Activated CD4-positive, alpha-beta T cell treated with anti-CD3 and anti-CD28 coated beads for 36 hours (primary cell): ENCODE measurements at regions of chr1 and their contacts with region 1.

Region 1: GRCh38 chr1:114511032-114511785 is at the start of gene TRIM33:
- DNase-seq: peak; percentile 95
- ATAC-seq: peak; percentile 77
- H3K4me3 Mint-ChIP-seq: peak within 1 kb of the TSS; percentile 81
- H3K27ac Mint-ChIP-seq: peak within 1 kb of the TSS; percentile 98
- H3K4me1 Mint-ChIP-seq: peaks cover 43% of the 10 kb centered on the region
- H3K27me3 Mint-ChIP-seq: no peaks in the 10 kb centered on the region
- total RNA-seq, gene TRIM33: 32.5 to 41.6 TPM

Region 2: GRCh38 chr1:112955781-112956543 is 1555.2 kb before region 1 on chr1 and contains the start of gene SLC16A1:
- CTCF ChIA-PET with region 1: no interaction called
- POLR2A ChIA-PET with region 1: no interaction called
- intact Hi-C with region 1: loop called in 1 of 2 experiments (anchors 1 kb)
- DNase-seq: peak; percentile 96
- ATAC-seq: peak; percentile 75
- H3K4me3 Mint-ChIP-seq: peak within 1 kb of the TSS; percentile 97
- H3K27ac Mint-ChIP-seq: peak within 1 kb of the TSS; percentile 100
- H3K4me1 Mint-ChIP-seq: peaks cover 56% of the 10 kb centered on the region
- H3K27me3 Mint-ChIP-seq: no peaks in the 10 kb centered on the region
- total RNA-seq, gene SLC16A1: 70.0 to 70.4 TPM

Region 3: GRCh38 chr1:113811888-113812660 is 699.1 kb before region 1 on chr1 and contains the start of gene RSBN1:
- CTCF ChIA-PET with region 1: no interaction called
- POLR2A ChIA-PET with region 1: no interaction called
- intact Hi-C with region 1: loop called in 1 of 2 experiments (anchors 5 kb)
- DNase-seq: peak; percentile 99
- ATAC-seq: peak; percentile 97
- H3K4me3 Mint-ChIP-seq: peak within 1 kb of the TSS; percentile 97
- H3K27ac Mint-ChIP-seq: peak within 1 kb of the TSS; percentile 97
- H3K4me1 Mint-ChIP-seq: peaks cover 33% of the 10 kb centered on the region
- H3K27me3 Mint-ChIP-seq: no peaks in the 10 kb centered on the region
- total RNA-seq, gene RSBN1: 22.1 to 24.3 TPM

Region 4: DNA sequence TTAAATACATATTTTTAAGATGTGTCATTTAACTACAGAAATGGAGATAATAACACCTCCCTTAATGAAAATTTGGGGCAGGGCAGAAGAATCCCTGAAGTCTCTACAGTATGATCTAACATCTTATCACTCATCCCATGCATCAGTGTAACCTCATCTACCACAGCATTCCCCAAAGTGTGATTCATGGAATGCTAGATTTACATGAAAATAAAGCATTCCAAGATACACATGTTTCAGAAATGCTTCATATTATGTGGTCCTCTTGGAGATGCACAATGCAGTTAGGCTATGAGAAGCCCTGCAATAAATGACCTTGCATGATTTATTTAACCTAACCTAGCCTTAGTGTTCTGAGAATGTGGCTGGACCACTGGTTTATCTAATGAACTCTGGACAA is 190.6 kb before region 1 on chr1:
- CTCF ChIA-PET with region 1: no interaction called
- POLR2A ChIA-PET with region 1: no interaction called
- intact Hi-C with region 1: no loop called
- DNase-seq: no peak
- ATAC-seq: no peak
- H3K4me3 Mint-ChIP-seq: no peak overlapping the region
- H3K27ac Mint-ChIP-seq: no peak overlapping the region
- H3K4me1 Mint-ChIP-seq: no peaks in the 10 kb centered on the region
- H3K27me3 Mint-ChIP-seq: no peaks in the 10 kb centered on the region

Region 5: GRCh38 chr1:114346480-114347029 is 164.7 kb before region 1 on chr1:
- CTCF ChIA-PET with region 1: interaction called, 3 read pairs
- POLR2A ChIA-PET with region 1: no interaction called
- intact Hi-C with region 1: loop called in 1 of 2 experiments (anchors 1 kb)
- DNase-seq: peak; percentile 98
- ATAC-seq: peak; percentile 98
- H3K4me3 Mint-ChIP-seq: peak overlapping the region; percentile 71
- H3K27ac Mint-ChIP-seq: peak overlapping the region; percentile 95
- H3K4me1 Mint-ChIP-seq: peaks cover 26% of the 10 kb centered on the region
- H3K27me3 Mint-ChIP-seq: no peaks in the 10 kb centered on the region

Region 6: GRCh38 chr1:114418247-114418646 is 93.0 kb before region 1 on chr1:
- CTCF ChIA-PET with region 1: no interaction called
- POLR2A ChIA-PET with region 1: no interaction called
- intact Hi-C with region 1: no loop called
- DNase-seq: no peak
- ATAC-seq: no peak
- H3K4me3 Mint-ChIP-seq: no peak overlapping the region
- H3K27ac Mint-ChIP-seq: peak overlapping the region; percentile 15
- H3K4me1 Mint-ChIP-seq: no peaks in the 10 kb centered on the region
- H3K27me3 Mint-ChIP-seq: no peaks in the 10 kb centered on the region

Region 7: DNA sequence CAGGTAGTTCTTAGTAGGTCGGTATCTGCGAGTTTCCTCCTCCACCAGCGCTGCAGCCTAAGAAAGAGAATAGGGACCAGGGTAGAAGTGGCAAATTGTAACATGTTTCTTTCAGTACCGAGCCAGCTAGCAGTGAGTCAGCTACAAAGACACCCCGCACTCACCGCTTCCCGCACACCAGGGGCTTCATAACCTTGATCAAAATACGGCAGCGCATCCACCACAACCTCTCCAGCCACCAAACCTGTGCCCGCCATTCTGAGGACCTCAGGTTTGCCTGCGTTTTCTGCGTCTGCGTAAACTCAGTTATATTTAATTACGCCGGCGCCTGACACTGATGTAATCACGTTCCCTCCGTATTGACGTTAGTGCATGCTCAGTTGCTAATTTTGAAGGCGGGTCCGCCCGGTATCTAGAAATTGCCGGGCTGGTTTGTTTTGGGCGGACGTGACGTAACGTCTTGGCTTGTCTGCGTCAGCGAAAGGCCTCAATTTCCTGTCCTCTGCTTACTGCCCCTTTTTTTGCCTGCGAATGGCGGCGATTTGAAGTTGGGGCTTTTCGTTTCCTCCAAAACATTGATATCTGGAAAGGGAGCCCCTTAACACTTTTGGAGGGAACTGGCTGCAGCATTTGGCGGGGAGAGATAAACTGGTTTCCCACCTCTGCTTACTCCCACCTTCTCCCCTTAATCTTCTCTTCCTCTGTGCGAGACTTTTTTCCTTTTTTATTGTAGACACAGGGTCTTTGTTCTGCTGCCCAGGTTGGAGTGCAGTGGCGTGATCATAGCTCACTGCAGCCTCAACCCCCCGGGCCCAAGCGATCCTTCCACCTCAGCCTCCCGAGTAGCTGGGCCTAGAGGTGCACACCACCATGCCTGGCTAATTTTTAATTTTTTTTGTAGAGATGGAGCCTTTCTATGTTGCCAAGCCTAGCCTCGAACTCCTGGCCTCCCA is 70.4 kb after region 1 on chr1 and contains the start of gene BCAS2:
- CTCF ChIA-PET with region 1: no interaction called
- POLR2A ChIA-PET with region 1: no interaction called
- intact Hi-C with region 1: loop called (anchors 1 to 2 kb)
- DNase-seq: peak; percentile 97
- ATAC-seq: peak; percentile 99
- H3K4me3 Mint-ChIP-seq: peak within 1 kb of the TSS; percentile 97
- H3K27ac Mint-ChIP-seq: peak within 1 kb of the TSS; percentile 98
- H3K4me1 Mint-ChIP-seq: peaks cover 29% of the 10 kb centered on the region
- H3K27me3 Mint-ChIP-seq: peaks cover 1% of the 10 kb centered on the region
- total RNA-seq, gene BCAS2: 54.1 to 54.8 TPM

Region 8: GRCh38 chr1:114620419-114620818 is 109.2 kb after region 1 on chr1:
- CTCF ChIA-PET with region 1: no interaction called
- POLR2A ChIA-PET with region 1: no interaction called
- intact Hi-C with region 1: no loop called
- DNase-seq: no peak
- ATAC-seq: no peak
- H3K4me3 Mint-ChIP-seq: no peak overlapping the region
- H3K27ac Mint-ChIP-seq: no peak overlapping the region
- H3K4me1 Mint-ChIP-seq: no peaks in the 10 kb centered on the region
- H3K27me3 Mint-ChIP-seq: peaks cover 4% of the 10 kb centered on the region

Region 9: DNA sequence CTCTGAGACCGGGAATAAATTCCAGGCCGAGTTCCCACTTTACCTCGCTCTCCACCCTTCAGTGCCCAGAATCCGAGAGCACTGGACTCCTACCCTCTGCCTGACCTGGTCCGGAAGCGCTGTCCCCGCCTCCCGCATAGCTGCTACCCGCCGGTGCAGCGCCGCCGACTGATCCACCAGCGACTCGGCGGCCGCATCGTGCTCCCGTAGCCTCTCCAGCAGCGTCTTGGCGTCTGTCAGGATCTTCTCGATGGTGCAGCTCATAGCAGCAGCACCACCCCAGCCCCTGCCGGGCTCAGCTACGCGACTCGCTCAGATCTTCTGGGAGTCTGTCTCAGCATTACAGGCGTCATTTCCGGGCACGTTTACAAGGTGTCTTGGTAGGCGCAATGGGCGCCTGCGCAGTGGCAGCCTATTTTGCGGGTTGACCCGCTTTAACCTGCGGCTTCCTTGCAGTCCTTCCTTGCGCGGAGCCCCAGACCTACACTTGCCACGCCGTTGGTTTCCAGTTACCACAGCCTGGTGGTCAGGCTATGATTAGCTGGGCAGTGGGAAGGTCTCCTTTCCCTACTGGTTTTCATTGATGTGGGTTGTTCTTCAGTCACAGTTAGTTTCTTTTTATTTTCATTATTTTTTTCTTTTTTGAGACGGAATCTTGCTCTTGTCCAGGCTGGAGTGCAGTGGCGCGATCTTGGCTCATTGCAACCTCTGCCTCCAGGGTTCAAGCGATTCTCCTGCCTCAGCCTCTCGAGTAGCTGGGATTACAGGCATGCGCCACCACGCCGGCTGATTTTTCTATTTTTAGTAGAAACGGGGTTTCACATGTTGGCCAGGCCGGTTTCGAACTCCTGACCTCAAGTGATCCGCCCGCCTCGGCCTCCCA is 269.4 kb after region 1 on chr1 and contains the start of gene SIKE1:
- CTCF ChIA-PET with region 1: no interaction called
- POLR2A ChIA-PET with region 1: no interaction called
- intact Hi-C with region 1: loop called in 1 of 2 experiments (anchors 2 kb)
- DNase-seq: peak; percentile 96
- ATAC-seq: peak; percentile 100
- H3K4me3 Mint-ChIP-seq: peak within 1 kb of the TSS; percentile 100
- H3K27ac Mint-ChIP-seq: peak within 1 kb of the TSS; percentile 97
- H3K4me1 Mint-ChIP-seq: peaks cover 21% of the 10 kb centered on the region
- H3K27me3 Mint-ChIP-seq: no peaks in the 10 kb centered on the region
- total RNA-seq, gene SIKE1: 56.9 to 67.2 TPM